OCI-LY7 (cell line): ENCODE measurements at regions of chr6 and their contacts with region 1.

Region 1: DNA sequence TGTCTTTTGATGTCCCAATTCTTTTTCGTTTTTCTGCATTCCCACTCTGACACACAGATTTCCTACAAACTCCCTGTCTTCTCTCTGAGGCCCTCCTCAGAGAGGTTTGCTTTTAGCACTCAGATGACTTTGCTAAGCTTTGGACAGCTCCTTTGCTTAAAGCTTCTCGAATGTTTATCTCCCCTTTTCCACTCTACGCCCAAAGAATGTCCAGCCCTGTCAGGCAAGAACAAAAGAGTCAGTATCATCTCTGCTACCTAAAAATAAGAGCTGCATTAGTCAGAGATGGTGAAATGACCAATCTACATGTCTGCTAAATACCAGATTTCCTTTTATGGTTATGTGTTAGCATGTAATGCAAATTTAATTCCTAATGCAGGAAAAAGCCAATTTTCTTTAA is 56.8 kb downstream of the PREP start:
- DNase-seq: no peak
- H3K4me3 ChIP-seq: no peak overlapping the region
- H3K27ac ChIP-seq: no peak overlapping the region
- H3K4me1 ChIP-seq: no peaks in the 10 kb centered on the region
- CTCF ChIP-seq: no peak

Region 2: DNA sequence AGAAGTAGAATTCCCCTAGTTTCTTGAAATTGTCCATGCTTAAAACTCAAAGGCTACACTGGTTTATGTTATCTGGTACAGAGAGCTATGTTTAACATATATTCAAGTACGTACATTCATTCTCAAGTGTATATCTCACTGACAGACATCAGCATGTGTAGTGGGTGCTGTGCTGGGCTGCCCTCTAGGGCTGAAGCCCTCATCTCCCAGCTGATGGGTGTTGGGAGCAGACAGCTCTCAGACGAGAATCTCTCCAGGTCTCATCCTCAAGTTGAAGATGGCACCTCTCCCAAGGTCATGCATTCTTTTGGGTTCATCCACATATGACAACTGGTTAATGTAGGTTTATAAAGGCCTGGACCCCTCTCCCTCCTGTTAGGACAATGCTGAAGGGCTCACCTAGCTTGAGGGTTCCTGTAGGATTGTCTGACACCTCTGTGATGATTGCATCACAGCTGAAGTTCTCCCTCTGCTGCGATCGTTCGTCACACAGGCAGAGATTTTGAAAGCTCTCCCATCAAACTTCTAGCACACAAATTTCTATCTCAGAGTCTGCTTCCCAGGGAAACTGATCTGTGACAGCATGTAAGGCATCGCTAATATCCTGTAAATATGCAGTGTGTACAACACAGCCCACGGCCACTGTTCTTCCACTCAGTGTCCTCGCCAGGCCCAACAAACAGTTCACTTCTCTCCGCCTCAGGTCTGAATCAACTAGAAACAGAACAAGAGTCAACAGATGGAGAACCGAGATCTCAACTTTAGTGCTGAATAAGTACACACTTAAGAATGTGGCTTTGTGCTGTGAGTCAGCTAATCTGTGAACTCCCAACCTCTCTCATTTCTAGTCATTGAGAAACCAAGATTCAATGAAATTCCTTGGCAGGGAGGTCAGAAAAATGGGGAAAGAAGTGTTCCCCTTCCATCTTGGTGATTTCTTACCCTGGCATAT is 13.6 kb after region 1 on chr6:
- CTCF ChIA-PET with region 1: no interaction called
- POLR2A ChIA-PET with region 1: interaction called, 10 read pairs
- intact Hi-C with region 1: no loop called
- DNase-seq: no peak
- H3K4me3 ChIP-seq: no peak overlapping the region
- H3K27ac ChIP-seq: no peak overlapping the region
- H3K4me1 ChIP-seq: no peaks in the 10 kb centered on the region
- CTCF ChIP-seq: no peak

Region 3: DNA sequence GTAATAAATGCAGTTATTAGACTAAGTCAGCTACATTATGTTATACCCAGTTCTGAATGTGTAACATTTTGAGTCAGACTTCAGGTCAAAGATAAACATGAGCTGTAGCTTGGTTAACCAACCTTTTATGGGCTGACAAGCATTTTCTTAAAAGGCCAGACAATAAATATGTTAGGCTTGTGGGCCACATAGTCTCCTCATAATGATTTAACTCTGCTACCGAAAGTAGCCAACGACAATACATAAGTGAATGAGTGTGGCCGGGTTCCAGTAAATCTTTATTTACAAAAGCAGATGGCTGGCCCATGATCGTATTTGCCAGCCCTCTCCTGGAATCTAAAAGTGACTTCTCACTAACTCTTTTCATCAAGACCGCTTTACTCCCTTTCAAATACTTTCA is 929.6 kb after region 1 on chr6:
- CTCF ChIA-PET with region 1: no interaction called
- POLR2A ChIA-PET with region 1: no interaction called
- intact Hi-C with region 1: no loop called
- DNase-seq: no peak
- H3K4me3 ChIP-seq: no peak overlapping the region
- H3K27ac ChIP-seq: no peak overlapping the region
- H3K4me1 ChIP-seq: peaks cover 13% of the 10 kb centered on the region
- CTCF ChIP-seq: no peak